HEK293 (cell line): ENCODE measurements at regions of chr1 and their contacts with region 1.

Region 1: GRCh38 chr1:163315773-163316374 is 5.9 kb upstream of the NUF2 start:
- H3K4me3 ChIP-seq: no peak overlapping the region
- H3K27ac ChIP-seq: no peak overlapping the region
- H3K4me1 ChIP-seq: no peaks in the 10 kb centered on the region
- CTCF ChIP-seq: no peak

Region 2: GRCh38 chr1:162847839-162848453 is 467.9 kb before region 1 on chr1:
- CTCF ChIA-PET with region 1: interaction called, 39 read pairs
- POLR2A ChIA-PET with region 1: no interaction called
- H3K4me3 ChIP-seq: no peak overlapping the region
- H3K27ac ChIP-seq: no peak overlapping the region
- H3K4me1 ChIP-seq: peaks cover 6% of the 10 kb centered on the region
- CTCF ChIP-seq: peak; percentile 60

Region 3: GRCh38 chr1:162854245-162854882 is 461.5 kb before region 1 on chr1:
- CTCF ChIA-PET with region 1: interaction called, 39 read pairs
- POLR2A ChIA-PET with region 1: no interaction called
- H3K4me3 ChIP-seq: no peak overlapping the region
- H3K27ac ChIP-seq: no peak overlapping the region
- H3K4me1 ChIP-seq: peaks cover 7% of the 10 kb centered on the region; the same call in 1 of the 2 replicates
- CTCF ChIP-seq: peak; percentile 36; the same call in 1 of the 2 replicates

Region 4: DNA sequence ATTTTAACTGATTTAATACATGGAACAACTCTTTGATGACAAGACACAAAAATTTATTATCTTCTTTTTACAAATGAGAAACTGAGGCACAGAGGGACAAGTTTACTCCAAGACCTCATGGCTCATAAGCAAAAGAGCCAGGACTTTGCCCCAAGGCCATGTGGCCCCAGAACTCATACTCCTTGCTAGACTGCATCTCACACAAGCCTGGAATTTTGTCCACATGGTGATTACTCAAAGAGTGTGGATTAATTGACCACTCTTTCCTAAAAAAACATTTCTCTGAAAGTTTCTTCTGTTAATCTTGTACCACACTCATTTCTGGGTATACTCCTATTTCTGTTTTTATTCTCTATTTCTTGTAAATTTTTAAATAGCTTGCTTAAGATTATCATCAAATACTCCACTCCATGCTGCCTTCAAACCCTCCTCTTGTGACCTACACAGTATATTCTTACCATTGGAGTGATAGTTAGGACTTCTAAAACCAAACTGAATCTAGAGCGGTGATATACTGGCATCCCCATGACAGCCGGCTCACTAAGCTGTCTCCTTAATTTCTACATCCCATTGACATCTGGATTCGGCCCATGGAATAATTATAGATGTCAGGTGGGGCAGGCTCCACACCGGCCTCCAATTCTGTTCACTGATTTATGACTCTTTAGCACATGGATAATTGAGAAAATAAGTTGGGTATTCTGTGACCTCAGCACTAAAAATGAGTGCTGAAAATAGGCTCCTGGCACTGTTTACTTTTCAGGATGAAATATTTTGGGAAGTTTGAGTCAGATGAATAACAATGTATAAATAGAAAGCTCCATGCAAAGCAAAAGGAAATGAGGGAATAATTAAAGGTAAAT is 230.6 kb before region 1 on chr1:
- CTCF ChIA-PET with region 1: no interaction called
- POLR2A ChIA-PET with region 1: no interaction called
- H3K4me3 ChIP-seq: no peak overlapping the region
- H3K27ac ChIP-seq: no peak overlapping the region
- H3K4me1 ChIP-seq: peaks cover 4% of the 10 kb centered on the region; the same call in 1 of the 2 replicates
- CTCF ChIP-seq: no peak

Region 5: GRCh38 chr1:163174524-163175437 is 141.1 kb before region 1 on chr1:
- CTCF ChIA-PET with region 1: interaction called, 29 read pairs
- POLR2A ChIA-PET with region 1: no interaction called
- H3K4me3 ChIP-seq: no peak overlapping the region
- H3K27ac ChIP-seq: no peak overlapping the region
- H3K4me1 ChIP-seq: peaks cover 7% of the 10 kb centered on the region; the same call in 1 of the 2 replicates
- CTCF ChIP-seq: peak; percentile 62

Region 6: DNA sequence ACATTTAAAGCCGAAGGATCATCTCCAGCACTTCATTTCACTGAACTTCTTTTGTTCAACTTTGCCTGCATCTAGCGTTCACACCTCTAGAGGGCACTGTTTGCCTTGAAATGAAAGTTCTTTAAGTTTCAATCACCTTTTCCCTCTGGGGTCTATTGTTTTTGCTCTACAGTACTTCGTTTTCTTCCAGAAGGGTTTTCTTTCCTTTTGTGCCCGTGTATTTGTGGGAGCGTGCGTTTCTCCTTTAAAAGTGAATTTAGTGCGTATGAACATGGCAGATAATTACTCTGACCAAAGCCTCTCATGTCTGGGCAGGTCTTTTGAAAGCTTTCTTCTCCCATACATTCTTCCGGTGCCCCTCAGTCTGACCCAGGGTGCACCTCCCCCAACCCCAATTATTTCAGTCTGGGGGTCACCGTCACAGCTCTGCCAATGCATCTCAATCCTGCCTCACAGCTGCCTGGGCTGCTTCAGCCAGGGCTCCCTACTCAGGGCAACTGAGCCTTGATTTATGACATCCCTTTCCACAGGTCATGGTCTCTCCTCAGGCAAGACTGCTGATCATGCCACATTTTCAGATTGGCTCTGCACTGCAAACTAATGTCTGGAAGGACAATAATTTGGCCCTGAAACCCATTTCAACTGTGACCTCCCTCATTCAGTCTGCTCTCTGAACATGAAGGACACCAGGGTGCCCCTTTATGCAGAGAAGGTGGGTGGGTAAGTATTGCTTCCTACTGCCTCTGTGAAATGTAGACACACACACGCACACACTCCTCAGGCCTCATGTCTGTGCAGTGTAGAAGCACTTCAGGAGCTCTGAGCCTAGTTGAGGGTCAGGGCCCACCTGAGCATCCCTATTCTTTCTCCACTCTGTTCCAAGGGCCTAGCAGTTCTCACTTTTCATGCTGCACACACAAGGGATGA is 94.5 kb after region 1 on chr1:
- CTCF ChIA-PET with region 1: no interaction called
- POLR2A ChIA-PET with region 1: no interaction called
- H3K4me3 ChIP-seq: no peak overlapping the region
- H3K27ac ChIP-seq: no peak overlapping the region
- H3K4me1 ChIP-seq: no peaks in the 10 kb centered on the region
- CTCF ChIP-seq: peak; percentile 45; the same call in 1 of the 2 replicates